IMR-90 (cell line): ENCODE measurements at regions of chr21 and their contacts with region 1.

Region 1: DNA sequence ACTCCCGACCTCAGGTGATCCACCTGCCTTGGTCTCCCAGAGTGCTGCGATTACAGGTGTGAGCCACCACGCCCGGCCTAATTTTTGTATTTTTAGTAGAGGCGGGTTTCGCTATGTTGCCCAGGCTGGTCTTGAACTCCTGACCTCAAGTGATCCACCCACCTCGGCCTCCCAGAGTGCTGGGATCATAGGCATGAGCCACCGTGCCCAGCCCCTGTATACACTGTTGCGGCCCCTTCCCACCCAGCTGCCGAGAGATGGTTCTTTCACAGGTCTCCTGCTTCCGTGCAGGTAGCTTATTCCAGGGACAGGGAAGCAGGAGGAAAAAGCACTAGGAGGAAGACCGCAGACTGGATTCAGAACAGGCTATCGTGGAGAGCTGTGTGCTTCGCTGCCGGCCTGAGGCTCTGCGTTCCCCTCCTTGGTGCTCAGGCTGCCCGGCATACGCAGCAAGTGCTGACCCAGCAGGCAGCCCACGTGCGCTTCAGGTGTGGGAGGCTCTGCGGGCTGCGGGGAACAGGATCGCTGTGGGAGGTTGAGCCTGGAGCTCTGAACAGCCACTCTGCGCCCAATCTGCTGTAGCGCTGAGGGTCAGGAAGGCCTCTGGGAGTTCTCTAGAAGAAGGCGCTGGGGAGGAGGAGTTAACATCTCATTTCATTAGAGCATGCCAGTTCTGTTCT is 27.8 kb downstream of the DOP1B start:
- DNase-seq: no peak
- ATAC-seq: no peak
- H3K4me3 ChIP-seq: no peak overlapping the region
- H3K27ac ChIP-seq: no peak overlapping the region
- H3K4me1 ChIP-seq: peaks cover 6% of the 10 kb centered on the region
- H3K27me3 ChIP-seq: no peaks in the 10 kb centered on the region
- CTCF ChIP-seq: no peak
- POLR2A ChIP-seq: no peak
- RAD21 ChIP-seq: no peak

Region 2: GRCh38 chr21:36141513-36141925 is 42.9 kb before region 1 on chr21:
- CTCF ChIA-PET with region 1: no interaction called
- POLR2A ChIA-PET with region 1: interaction called, 15 read pairs
- dilution Hi-C with region 1: no loop called
- in situ Hi-C with region 1: no loop called
- intact Hi-C with region 1: no loop called
- DNase-seq: peak; percentile 89
- ATAC-seq: peak; percentile 84
- H3K4me3 ChIP-seq: no peak overlapping the region
- H3K27ac ChIP-seq: no peak overlapping the region
- H3K4me1 ChIP-seq: peaks cover 2% of the 10 kb centered on the region
- H3K27me3 ChIP-seq: no peaks in the 10 kb centered on the region
- CTCF ChIP-seq: peak; percentile 82
- POLR2A ChIP-seq: no peak
- RAD21 ChIP-seq: peak; percentile 85

Region 3: DNA sequence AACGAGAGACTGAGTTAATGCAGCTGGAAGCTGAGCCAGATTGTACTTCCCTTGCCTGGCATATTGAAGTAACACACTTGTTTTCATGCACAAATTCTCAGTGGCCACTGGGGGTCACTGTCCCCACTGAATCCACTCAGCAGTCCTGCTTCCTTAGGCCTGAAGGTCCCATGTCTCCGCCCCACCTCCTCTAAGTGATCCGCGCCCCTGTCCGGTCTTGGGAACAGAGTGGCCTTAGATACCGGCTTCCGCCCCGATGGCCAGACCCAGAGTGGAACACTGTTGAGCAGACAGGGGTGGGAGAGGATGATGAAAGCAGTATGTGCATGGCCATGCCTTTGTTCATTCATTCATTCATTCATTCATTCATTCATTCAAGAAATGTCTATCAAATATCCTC is 235.6 kb after region 1 on chr21:
- CTCF ChIA-PET with region 1: no interaction called
- POLR2A ChIA-PET with region 1: no interaction called
- dilution Hi-C with region 1: no loop called
- in situ Hi-C with region 1: no loop called
- intact Hi-C with region 1: no loop called
- DNase-seq: peak; percentile 92
- ATAC-seq: peak; percentile 98
- H3K4me3 ChIP-seq: no peak overlapping the region
- H3K27ac ChIP-seq: no peak overlapping the region
- H3K4me1 ChIP-seq: no peaks in the 10 kb centered on the region
- H3K27me3 ChIP-seq: no peaks in the 10 kb centered on the region
- CTCF ChIP-seq: peak; percentile 93
- POLR2A ChIP-seq: no peak
- RAD21 ChIP-seq: peak; percentile 97